Dorsolateral prefrontal cortex (tissue), 120 donors: ENCODE measurements at regions of chr20 and their contacts with region 1.

Region 1: GRCh38 chr20:45812157-45813020 is at the start of gene UBE2C:
- DNase-seq: peak; percentile 95 to 100 (median 98)
- H3K4me3 ChIP-seq: peak within 1 kb of the TSS; percentile 36 to 83 (median 62)
- H3K27ac ChIP-seq: peak within 1 kb of the TSS in 9 of 59 donors; percentile 12 to 70 (median 34)
- H3K27me3 ChIP-seq: no peaks in the 10 kb centered on the region
- CTCF ChIP-seq: peak in 15 of 56 donors; percentile 7 to 33 (median 21)
- total RNA-seq, gene UBE2C: 0.62 to 2.7 (median 1.2) TPM in 12 of 120 experiments, not detected in the others

Region 2: GRCh38 chr20:45576995-45577394 is 235.4 kb before region 1 on chr20:
- intact Hi-C with region 1: no loop called
- DNase-seq: no peak
- H3K4me3 ChIP-seq: no peak overlapping the region
- H3K27ac ChIP-seq: no peak overlapping the region
- H3K27me3 ChIP-seq: peaks cover 0 to 4% (median 0%) of the 10 kb centered on the region in 45 donors
- CTCF ChIP-seq: no peak

Region 3: GRCh38 chr20:45857114-45857881 is 44.9 kb after region 1 on chr20 and contains the starts of genes ACOT8 and ZSWIM3:
- intact Hi-C with region 1: loop called in 1 of 2 experiments (anchors 5 kb)
- DNase-seq: peak; percentile 75 to 98 (median 95)
- H3K4me3 ChIP-seq: peak within 1 kb of the TSS; percentile 68 to 100 (median 93)
- H3K27ac ChIP-seq: peak within 1 kb of the TSS in 58 of 59 donors; percentile 42 to 96 (median 85)
- H3K27me3 ChIP-seq: no peaks in the 10 kb centered on the region
- CTCF ChIP-seq: peak in 8 of 56 donors; percentile 5 to 35 (median 18)
- total RNA-seq, gene ACOT8: 27.3 to 54.9 (median 41.6) TPM
- total RNA-seq, gene ZSWIM3: 2.8 to 9.6 (median 6.0) TPM

Region 4: GRCh38 chr20:46157625-46158024 is 345.2 kb after region 1 on chr20:
- intact Hi-C with region 1: no loop called
- DNase-seq: no peak
- H3K4me3 ChIP-seq: no peak overlapping the region
- H3K27ac ChIP-seq: no peak overlapping the region
- H3K27me3 ChIP-seq: peaks cover 0 to 16% (median 0%) of the 10 kb centered on the region in 45 donors
- CTCF ChIP-seq: no peak